MCF 10A (cell line): ENCODE measurements at regions of chr20 and their contacts with region 1.

Region 1: DNA sequence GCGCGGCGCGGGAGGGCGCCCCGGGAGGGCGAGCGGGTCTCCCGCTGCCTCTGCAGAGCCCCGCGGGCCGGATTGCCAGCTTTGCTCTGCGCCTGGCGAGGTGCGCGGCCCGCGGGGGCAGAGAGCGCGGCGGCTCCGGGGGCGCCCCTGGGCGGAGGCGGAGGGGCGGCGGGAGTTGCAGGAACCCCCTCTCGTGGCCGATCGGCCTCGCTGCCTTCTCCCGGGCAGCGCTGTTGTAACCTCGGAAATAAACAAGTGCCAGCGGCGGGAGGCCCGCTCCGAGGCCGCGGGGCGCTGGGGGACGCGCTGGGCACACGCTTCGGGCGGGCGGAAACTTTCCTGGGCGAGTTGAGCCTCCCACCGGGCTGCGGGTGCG is 1.2 kb downstream of the CDH4 start:
- DNase-seq: peak; percentile 41
- H3K4me3 Mint-ChIP-seq: peak overlapping the region; percentile 68
- H3K27ac Mint-ChIP-seq: no peak overlapping the region
- H3K4me1 Mint-ChIP-seq: peaks cover 16% of the 10 kb centered on the region
- H3K27me3 Mint-ChIP-seq: peaks cover 7% of the 10 kb centered on the region
- CTCF ChIP-seq: peak; percentile 26

Region 2: DNA sequence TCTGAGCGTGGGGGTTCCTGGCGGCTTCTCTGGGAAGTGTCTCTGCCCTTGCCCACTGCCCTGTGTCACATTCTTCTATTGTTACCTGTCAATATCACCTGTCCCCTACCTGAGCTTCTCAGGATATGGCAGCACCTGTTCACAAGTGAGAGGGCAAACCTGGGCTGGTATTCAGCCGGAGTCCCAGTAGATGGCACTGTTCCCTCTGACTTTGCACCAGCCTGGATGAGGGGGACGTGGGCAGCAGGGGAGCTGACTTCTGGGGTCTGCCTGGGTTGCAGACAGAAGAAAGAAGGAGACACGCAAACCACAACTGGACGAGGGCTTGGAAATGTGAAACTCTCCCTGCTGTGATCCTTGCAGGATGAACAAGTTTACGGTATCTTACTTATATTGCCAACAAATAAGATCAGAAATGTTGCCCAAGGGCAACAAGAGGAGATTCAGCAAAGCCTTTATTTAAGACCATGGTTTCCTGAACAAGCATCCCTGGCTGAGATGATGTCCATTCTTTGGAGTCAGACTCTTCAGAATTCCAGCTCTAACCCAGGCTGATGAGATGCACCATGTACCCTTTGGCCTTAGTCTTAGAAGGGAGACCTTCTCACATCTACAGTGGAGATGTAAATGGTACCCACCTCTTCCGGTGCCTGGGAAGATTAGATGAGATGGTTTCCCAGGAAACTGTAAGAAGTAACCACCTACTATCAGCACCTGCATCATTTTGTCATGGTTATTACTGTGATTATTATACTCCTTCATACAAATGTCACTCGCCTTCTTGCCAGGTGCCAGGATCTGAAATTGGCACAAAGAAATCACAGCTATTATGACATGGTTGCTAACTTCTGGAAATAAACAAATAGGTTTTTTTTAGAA is 401.2 kb before region 1 on chr20:
- CTCF ChIA-PET with region 1: interaction called, 4 read pairs
- POLR2A ChIA-PET with region 1: no interaction called
- intact Hi-C with region 1: loop called (anchors 10 kb)
- DNase-seq: peak; percentile 31
- H3K4me3 Mint-ChIP-seq: no peak overlapping the region
- H3K27ac Mint-ChIP-seq: no peak overlapping the region
- H3K4me1 Mint-ChIP-seq: no peaks in the 10 kb centered on the region
- H3K27me3 Mint-ChIP-seq: peaks cover 69% of the 10 kb centered on the region
- CTCF ChIP-seq: peak; percentile 79

Region 3: DNA sequence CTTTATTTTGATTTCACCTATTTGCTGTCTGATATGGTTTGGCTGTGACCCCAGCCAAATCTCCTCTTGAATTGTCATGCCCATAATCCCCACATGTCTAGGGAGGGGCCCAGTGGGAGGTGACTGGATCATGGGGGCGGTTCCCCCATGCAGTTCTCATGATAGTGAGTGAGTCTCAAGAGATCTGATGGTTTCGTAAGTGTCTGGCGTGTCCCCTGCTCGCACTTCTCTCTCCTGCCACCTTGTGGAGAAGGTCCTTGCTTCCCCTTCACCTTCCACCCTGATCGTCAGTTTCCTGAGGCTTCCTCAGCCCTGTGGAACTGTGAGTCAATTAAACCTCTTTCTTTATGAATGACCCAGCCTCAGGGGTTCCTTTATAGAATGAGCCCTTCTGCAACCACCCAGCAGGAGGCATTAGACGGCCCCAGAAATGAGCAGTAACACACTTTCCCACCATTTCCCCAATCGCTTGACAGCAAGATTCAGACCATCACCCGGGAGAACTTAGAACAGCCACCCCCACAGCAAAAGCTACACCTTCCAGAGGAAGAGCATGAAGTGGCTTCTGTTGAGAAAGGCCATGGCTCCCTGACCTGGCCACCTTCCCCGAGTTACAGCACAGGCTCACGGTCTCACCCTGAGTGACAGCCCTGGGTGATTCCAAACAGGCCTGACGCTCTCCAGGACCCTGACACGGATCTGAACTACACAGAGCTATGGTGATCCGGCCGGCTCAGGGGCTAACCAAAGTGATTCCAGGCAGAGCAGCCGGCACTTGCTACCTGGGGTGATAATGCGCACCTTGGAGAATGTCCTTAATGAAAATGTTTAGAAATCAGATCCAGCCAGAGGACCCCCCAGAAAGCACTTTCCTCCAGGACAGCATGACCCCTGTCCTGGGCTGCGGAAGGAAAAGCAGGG is 132.4 kb before region 1 on chr20:
- CTCF ChIA-PET with region 1: no interaction called
- POLR2A ChIA-PET with region 1: no interaction called
- intact Hi-C with region 1: loop called (anchors 10 kb)
- DNase-seq: peak; percentile 83
- H3K4me3 Mint-ChIP-seq: no peak overlapping the region
- H3K27ac Mint-ChIP-seq: no peak overlapping the region
- H3K4me1 Mint-ChIP-seq: peaks cover 6% of the 10 kb centered on the region
- H3K27me3 Mint-ChIP-seq: peaks cover 41% of the 10 kb centered on the region
- CTCF ChIP-seq: peak; percentile 61

Region 4: GRCh38 chr20:61185841-61186601 is 67.2 kb before region 1 on chr20:
- CTCF ChIA-PET with region 1: interaction called, 9 read pairs
- POLR2A ChIA-PET with region 1: interaction called, 4 read pairs
- intact Hi-C with region 1: loop called (anchors 5 kb)
- DNase-seq: peak; percentile 82
- H3K4me3 Mint-ChIP-seq: peak overlapping the region; percentile 60
- H3K27ac Mint-ChIP-seq: peak overlapping the region; percentile 79
- H3K4me1 Mint-ChIP-seq: peaks cover 27% of the 10 kb centered on the region
- H3K27me3 Mint-ChIP-seq: no peaks in the 10 kb centered on the region
- CTCF ChIP-seq: no peak

Region 5: DNA sequence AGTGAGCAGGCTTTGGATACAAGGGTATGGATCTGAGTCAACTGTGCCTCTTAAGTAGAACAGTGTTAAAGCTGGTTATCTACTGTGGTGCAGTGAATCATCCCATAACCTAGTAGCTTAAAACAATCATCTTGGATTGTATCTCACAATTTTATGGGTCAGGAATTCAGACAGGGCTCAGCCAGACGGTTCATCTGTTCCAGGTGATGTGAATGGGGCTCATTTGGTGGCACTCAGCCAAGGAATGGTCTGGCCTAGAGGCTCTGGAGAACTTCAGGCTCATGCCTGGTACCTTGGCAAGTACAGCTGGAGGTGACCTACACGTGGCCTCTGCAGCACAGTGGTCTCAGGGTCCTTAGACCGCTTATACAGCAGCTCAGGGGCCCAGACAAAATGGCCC is 12.4 kb before region 1 on chr20:
- CTCF ChIA-PET with region 1: interaction called, 11 read pairs
- POLR2A ChIA-PET with region 1: interaction called, 3 read pairs
- intact Hi-C with region 1: no loop called
- DNase-seq: no peak
- H3K4me3 Mint-ChIP-seq: no peak overlapping the region
- H3K27ac Mint-ChIP-seq: no peak overlapping the region
- H3K4me1 Mint-ChIP-seq: no peaks in the 10 kb centered on the region
- H3K27me3 Mint-ChIP-seq: peaks cover 86% of the 10 kb centered on the region
- CTCF ChIP-seq: no peak

Region 6: GRCh38 chr20:61874501-61875026 is 621.3 kb after region 1 on chr20:
- CTCF ChIA-PET with region 1: no interaction called
- POLR2A ChIA-PET with region 1: no interaction called
- intact Hi-C with region 1: loop called (anchors 5 kb)
- DNase-seq: peak; percentile 11
- H3K4me3 Mint-ChIP-seq: no peak overlapping the region
- H3K27ac Mint-ChIP-seq: no peak overlapping the region
- H3K4me1 Mint-ChIP-seq: no peaks in the 10 kb centered on the region
- H3K27me3 Mint-ChIP-seq: no peaks in the 10 kb centered on the region
- CTCF ChIP-seq: peak; percentile 30